A549 (cell line): ENCODE measurements at regions of chr11 and their contacts with region 1.

Region 1: DNA sequence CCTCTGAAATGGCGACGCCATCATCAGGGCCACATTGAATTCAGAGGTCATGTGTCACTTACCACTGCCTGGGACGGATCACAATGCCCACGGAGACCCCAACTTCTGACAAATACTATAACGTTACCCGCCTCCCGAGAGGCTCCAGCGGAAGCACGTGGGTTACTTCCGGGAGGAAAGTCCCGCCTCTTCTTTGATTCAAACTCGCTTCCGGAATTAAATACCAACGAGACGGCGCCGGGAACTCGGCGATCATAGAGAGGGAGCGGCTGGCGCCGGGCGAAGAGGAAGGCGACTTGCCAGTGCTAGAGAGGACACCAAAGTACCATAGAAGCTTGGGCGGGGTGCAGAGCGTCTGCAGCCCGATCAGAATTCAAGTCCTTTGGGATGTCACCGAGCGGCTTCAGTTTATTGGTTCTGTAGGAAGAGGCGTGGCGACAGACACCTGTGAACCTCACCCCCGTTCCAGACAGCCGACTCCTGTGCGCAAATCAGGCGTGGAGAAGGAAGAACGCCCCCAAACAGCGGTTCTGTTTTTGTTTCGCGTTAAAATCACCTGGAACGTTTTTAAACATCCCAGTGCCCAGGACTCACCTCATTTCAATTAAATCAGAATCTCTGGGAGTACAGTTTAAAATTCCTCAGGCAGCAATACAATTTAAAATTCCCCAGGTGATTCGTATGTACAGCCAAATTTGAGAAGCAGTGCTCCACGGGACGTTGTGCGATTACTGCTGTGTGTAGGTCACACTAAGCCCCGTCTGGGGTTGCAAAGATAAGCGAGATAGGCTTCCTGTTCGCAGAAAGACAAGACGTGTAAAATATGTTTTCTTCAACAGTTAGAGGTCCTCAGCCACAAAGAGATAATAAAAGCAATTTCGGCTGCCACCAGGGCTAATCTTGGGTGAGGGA is at the start of gene TIMM10:
- DNase-seq: peak; percentile 95 to 99
- ATAC-seq: peak; percentile 95 to 99
- H3K4me3 ChIP-seq: peak within 1 kb of the TSS; percentile 68
- H3K27ac ChIP-seq: peak within 1 kb of the TSS; percentile 75 to 89
- H3K4me1 ChIP-seq: peaks cover 12% of the 10 kb centered on the region
- CTCF ChIP-seq: no peak
- EP300 ChIP-seq: no peak
- POLR2A ChIP-seq: peak; percentile 18; the same call in 1 of the 2 replicates
- RAD21 ChIP-seq: no peak
- polyA plus RNA-seq, gene TIMM10: 248 and 249 TPM in 2 replicates

Region 2: DNA sequence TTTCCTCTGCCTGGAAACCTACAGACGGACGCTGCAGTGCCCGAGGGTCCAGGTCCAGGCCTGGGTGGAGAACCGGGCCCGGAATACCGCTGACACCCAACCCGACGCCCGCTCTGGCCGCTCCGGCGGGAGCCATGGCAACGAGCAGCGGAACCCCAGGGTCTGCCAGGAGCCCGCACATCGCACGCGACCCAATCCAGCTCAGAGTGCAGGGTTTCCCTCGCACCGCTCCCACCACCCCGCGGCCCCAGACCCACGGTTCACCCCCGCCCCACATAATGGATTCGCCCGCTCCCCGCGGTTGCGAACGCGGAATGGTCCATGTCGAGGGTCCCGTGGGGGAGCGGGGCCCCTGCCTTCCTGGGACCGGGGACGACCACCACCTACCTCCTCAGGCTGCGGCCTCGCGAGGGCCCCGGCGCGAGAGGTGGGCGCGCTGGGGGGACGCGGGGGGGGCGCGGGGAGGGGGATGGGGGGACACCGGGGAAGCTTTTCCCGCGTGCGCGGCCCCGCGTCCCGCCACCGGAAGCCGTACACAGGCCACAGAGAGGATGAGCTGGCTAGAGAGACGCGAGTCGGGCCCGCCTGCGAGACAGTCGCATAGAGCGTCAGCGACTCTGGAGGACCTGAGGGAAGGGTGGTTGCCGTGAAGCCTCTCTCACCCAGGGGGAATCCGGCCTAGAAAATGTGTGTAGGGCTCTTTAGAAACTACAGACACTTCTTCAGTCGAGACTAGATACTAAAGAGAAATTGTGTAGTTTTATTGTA is 195.3 kb before region 1 on chr11 and contains the start of gene SSRP1:
- CTCF ChIA-PET with region 1: interaction called, 16 read pairs
- POLR2A ChIA-PET with region 1: no interaction called
- DNase-seq: peak; percentile 91 to 92
- ATAC-seq: peak; percentile 94 to 99
- H3K4me3 ChIP-seq: peak within 1 kb of the TSS; percentile 81
- H3K27ac ChIP-seq: peak within 1 kb of the TSS; percentile 95 to 99
- H3K4me1 ChIP-seq: peaks cover 18% of the 10 kb centered on the region
- CTCF ChIP-seq: no peak; the same call in 2 of the 3 replicates
- EP300 ChIP-seq: no peak
- POLR2A ChIP-seq: peak; percentile 56
- RAD21 ChIP-seq: no peak
- polyA plus RNA-seq, gene SSRP1: 282 and 288 TPM in 2 replicates

Region 3: DNA sequence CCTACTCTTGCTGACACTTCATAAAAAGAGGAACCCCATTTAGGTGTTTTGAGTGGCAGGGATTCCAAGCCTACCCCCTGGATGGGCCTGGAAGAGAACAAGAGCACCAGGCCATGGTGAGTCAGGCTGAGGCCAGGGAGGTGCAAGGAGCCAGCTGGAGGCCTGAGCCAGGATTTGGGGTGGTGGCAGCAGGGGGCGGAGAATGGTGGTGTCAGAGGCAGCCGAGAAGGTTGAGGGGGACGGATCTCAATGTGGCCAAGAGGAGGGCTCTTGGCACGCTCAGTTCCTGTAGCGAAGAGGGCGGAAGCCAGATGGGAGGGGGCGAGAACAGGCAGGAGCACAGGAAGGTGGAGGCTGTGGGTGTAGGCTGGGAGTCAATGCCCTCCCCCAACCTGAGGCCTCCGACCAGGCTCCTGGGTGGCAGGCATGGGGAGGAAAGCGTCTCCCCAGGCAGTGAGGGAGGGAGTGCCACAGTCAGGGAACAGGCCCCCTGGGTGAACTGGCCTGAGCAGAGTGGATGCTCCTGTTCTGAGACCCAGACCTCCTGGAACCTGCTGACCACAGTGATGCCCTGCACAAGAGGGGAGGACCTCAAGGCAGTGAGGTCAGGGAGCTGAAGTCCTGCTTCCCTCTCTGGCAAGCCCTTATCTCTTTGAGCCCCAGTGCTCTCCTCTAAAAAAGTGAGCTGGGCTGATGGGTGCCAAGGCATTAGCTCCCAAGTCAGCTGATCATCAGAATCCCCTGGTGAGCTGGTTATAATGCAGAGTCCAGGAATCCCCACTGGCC is 56.6 kb before region 1 on chr11:
- CTCF ChIA-PET with region 1: interaction called, 32 read pairs
- POLR2A ChIA-PET with region 1: no interaction called
- DNase-seq: no peak
- ATAC-seq: peak; percentile 10 to 12; a peak in 3 of 6 replicates
- H3K4me3 ChIP-seq: no peak overlapping the region
- H3K27ac ChIP-seq: 0 out of 6 replicates have a peak overlapping the region, but pooled peaks of 1 of the 2 experiments have one; percentile 14
- H3K4me1 ChIP-seq: peaks cover 46% of the 10 kb centered on the region
- CTCF ChIP-seq: no peak
- EP300 ChIP-seq: no peak
- POLR2A ChIP-seq: no peak
- RAD21 ChIP-seq: no peak

Region 4: DNA sequence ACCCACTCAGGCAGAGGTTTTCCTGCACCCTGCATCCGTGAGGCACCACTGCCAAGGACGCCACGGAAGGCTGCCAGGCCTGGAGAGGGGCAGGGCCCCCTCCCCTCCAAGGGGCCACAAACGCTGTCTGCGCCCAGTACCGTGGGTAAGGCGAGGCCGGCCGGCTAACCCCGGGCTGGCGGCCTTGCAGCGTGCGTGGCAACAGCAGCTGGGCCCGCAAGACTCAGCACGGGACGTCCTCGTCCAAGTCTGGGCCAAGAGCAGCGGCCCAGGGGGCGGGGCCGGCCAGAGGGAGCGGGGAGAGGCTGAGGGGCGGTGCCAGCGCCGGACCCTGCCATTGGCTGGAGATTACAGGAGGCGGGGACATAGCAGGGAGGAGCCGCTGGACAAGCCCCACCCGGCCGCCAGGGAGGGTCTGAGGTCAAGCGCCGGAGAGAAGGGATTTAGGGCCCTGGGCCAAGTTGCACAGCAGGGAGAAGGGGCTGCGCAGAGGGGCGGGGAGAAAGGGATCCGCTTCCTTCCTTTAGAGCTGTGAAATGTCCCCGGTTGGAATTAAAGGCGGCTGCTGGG is 31.4 kb before region 1 on chr11:
- CTCF ChIA-PET with region 1: interaction called, 299 read pairs
- POLR2A ChIA-PET with region 1: no interaction called
- DNase-seq: peak; percentile 83 to 98
- ATAC-seq: peak; percentile 98 to 100
- H3K4me3 ChIP-seq: peak overlapping the region; percentile 23; the same call in 2 of the 3 replicates
- H3K27ac ChIP-seq: peak overlapping the region; percentile 62 to 84; a peak in 5 of 6 replicates
- H3K4me1 ChIP-seq: peaks cover 11% of the 10 kb centered on the region; the same call in 2 of the 3 replicates
- CTCF ChIP-seq: no peak
- EP300 ChIP-seq: no peak
- POLR2A ChIP-seq: peak; percentile 38; the same call in 1 of the 2 replicates
- RAD21 ChIP-seq: no peak

Region 5: GRCh38 chr11:57597916-57598830 is 67.3 kb after region 1 on chr11:
- CTCF ChIA-PET with region 1: no interaction called
- POLR2A ChIA-PET with region 1: no interaction called
- DNase-seq: no peak
- ATAC-seq: peak; percentile 43 to 76; a peak in 5 of 6 replicates
- H3K4me3 ChIP-seq: peak overlapping the region; percentile 38
- H3K27ac ChIP-seq: peak overlapping the region; percentile 50 to 80
- H3K4me1 ChIP-seq: peaks cover 7% of the 10 kb centered on the region; the same call in 1 of the 3 replicates
- CTCF ChIP-seq: no peak
- EP300 ChIP-seq: no peak
- POLR2A ChIP-seq: no peak
- RAD21 ChIP-seq: no peak

Region 6: GRCh38 chr11:57644748-57645688 is 114.2 kb after region 1 on chr11:
- CTCF ChIA-PET with region 1: interaction called, 64 read pairs
- POLR2A ChIA-PET with region 1: interaction called, 3 read pairs
- DNase-seq: peak; percentile 76 to 85
- ATAC-seq: peak; percentile 60 to 76; a peak in 5 of 6 replicates
- H3K4me3 ChIP-seq: no peak overlapping the region
- H3K27ac ChIP-seq: no peak overlapping the region
- H3K4me1 ChIP-seq: peaks cover 32% of the 10 kb centered on the region
- CTCF ChIP-seq: peak; percentile 88
- EP300 ChIP-seq: no peak
- POLR2A ChIP-seq: no peak
- RAD21 ChIP-seq: peak; percentile 74 to 76